ENCODE measurements at regions of chr6 and their contacts with region 1.

Region 1: GRCh38 chr6:137866914-137867684 is at the start of gene TNFAIP3:
- DNase-seq: peak; percentile 95
- H3K4me3 ChIP-seq: peak within 1 kb of the TSS; percentile 75 to 94 (median 94)
- H3K27ac ChIP-seq: peak within 1 kb of the TSS; percentile 95
- H3K4me1 ChIP-seq: peaks cover 44% of the 10 kb centered on the region
- H3K27me3 ChIP-seq: no peaks in the 10 kb centered on the region
- CTCF ChIP-seq: peak; percentile 55 to 66
- total RNA-seq, gene TNFAIP3: 5.2 to 117 TPM

Region 2: DNA sequence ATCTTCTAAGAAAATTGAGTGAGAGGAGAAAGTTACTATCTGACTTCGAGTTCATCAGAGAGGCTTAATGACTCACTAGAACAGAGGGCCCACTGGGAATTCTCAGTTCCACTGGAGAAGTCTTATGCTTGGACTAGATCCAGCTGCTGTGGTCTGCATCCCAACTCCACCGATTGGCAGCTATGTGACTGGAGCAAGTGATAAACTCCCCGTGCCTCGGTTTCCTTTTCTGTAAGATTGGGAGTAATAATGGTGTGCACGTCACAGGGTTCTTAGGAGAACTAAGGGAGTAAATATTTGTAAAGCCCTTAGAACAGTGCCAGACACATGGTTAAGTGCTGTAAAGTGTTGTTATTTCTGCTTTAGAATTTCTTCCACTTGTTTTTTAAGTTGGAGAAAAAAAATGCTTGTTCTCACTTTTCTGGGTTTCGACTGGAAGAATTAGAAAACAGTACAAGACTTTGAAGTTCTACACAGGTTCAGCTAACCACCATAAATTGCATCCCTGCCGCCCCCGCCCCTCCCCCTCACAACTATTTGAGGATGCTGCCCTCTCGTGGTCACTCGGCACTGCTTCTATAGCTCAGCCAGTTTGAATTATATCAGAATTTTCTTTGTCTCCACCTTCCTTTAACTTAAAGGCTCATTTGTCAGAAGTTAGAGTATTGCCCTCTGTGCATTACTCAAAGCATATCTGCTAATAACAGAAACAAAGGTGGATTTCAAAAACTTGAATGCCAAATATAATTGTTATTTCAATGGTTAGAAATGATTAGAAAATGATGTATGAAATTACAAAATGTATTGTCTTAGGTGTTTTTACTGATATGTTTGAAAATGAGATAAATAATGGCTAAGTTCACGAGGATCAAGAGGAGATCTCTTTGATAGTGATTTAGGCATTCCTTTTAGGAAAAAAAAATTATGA is 552.9 kb before region 1 on chr6:
- CTCF ChIA-PET with region 1: no interaction called
- dilution Hi-C with region 1: no loop called
- in situ Hi-C with region 1: no loop called
- intact Hi-C with region 1: no loop called
- DNase-seq: peak; percentile 30
- H3K4me3 ChIP-seq: no peak overlapping the region
- H3K27ac ChIP-seq: no peak overlapping the region
- H3K4me1 ChIP-seq: peaks cover 5% of the 10 kb centered on the region
- H3K27me3 ChIP-seq: no peaks in the 10 kb centered on the region
- CTCF ChIP-seq: peak; percentile 83

Region 3: DNA sequence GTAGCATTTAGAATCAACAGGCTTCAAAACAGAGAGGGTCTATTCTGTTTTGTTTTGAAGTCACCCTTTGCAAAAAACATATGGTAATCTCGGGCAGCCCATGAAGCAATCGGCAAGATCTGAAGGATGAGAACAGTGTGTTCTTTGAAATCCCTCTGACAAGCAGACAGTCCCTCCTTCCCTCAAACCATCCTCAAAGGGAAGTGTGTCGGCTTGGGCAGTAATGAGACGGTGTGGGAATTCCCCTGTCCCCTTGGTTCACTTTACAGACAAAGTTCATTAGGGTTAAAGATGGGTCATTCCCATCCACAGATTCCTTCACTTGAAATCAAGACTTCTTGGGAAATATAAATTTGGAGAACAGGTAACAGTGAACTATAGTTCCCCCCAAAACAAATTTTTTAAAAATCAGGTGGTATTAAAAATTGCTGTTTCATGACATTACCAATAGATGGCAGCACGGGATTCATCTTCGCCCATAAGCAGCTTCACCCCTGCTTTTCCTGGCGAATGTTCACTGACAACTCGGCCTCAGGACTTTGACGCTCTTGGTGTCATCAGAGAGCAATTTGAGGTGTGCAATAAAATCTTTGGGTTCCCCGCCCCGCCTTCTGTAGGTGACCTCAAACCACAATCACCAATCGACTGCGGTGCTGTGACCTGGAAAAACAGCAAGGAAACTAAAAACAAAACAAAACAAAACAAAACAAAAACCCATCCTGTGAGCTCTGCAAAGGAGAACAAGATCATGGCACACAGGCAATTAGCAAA is 159.3 kb before region 1 on chr6:
- CTCF ChIA-PET with region 1: interaction called, 9 read pairs
- dilution Hi-C with region 1: no loop called
- in situ Hi-C with region 1: loop called (anchors 5 kb)
- intact Hi-C with region 1: loop called (anchors 1 kb)
- DNase-seq: peak; percentile 92
- H3K4me3 ChIP-seq: no peak overlapping the region
- H3K27ac ChIP-seq: peak overlapping the region; percentile 64
- H3K4me1 ChIP-seq: peaks cover 7% of the 10 kb centered on the region
- H3K27me3 ChIP-seq: no peaks in the 10 kb centered on the region
- CTCF ChIP-seq: peak; percentile 65 to 75

Region 4: DNA sequence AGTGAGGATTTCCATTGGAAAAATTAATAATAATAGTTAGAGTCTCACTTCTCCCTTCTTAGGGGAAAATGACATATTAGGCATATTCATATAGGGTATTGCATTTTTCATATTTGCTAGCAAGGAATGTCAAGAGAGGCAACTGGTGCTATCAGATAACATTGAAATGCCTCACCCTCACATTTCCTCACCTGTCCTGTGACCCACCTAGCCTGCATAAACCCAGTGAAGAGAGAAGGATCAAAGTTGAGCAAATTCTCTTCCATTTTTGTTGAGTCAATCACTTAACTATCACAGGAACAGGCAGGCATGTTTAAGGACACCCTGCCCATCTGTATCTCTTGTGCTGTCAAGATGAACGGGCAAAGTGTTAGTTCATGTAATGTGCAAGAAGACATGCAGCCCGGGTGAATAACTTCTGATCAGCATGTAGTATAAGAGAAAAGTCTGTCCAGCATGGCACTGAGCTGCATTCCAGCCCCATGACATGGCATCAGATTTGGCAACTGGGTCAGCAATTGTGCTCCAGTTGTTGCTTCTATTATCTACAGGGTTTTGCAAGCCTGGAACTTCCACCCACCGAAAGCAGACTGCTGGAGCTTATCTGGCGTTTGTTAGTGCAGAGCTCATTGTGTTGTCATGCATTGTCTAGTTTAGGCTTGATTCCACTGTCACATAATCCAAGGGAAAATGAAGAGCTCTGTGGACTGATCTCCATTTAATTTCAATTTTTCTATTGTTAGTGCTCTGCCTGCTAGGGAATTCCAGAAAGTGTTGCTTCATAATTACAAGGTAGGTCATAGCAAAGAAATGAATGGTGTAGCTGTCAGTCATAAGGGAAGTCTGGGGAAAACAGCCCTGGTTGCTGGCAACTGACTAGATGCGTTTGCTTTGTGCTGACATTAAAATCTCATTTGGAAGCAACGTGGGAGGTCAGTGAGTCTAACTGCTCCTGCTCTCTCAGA is 138.4 kb before region 1 on chr6:
- CTCF ChIA-PET with region 1: interaction called, 6 read pairs
- dilution Hi-C with region 1: no loop called
- in situ Hi-C with region 1: no loop called
- intact Hi-C with region 1: loop called (anchors 1 kb)
- DNase-seq: peak; percentile 99
- H3K4me3 ChIP-seq: no peak overlapping the region
- H3K27ac ChIP-seq: peak overlapping the region; percentile 91
- H3K4me1 ChIP-seq: peaks cover 51% of the 10 kb centered on the region
- H3K27me3 ChIP-seq: no peaks in the 10 kb centered on the region
- CTCF ChIP-seq: no peak

Region 5: GRCh38 chr6:137799950-137800568 is 67.0 kb before region 1 on chr6:
- CTCF ChIA-PET with region 1: interaction called, 8 read pairs
- dilution Hi-C with region 1: no loop called
- in situ Hi-C with region 1: loop called in 1 of 2 experiments (anchors 5 kb)
- intact Hi-C with region 1: loop called (anchors 1 kb)
- DNase-seq: peak; percentile 72
- H3K4me3 ChIP-seq: no peak overlapping the region
- H3K27ac ChIP-seq: no peak overlapping the region
- H3K4me1 ChIP-seq: no peaks in the 10 kb centered on the region
- H3K27me3 ChIP-seq: no peaks in the 10 kb centered on the region
- CTCF ChIP-seq: peak; percentile 71 to 73

Region 6: DNA sequence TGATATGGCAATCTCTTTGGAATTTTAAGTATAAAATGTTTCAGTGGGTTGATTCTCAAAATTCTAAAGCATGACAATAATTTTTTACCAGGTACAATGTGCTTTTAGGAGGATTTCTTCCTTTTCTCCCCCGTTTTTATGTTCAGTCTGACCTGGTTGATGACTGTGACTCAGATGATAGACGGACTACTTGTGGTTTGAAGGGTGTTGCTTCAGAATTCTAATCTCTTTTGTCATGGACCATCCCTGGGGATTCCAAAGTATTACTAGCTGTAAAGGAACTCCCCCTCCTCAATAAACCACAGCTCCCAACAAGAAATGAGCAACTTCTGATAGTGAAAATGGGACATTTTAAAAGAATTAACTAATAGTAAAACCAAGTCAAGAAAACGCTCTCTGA is 35.0 kb before region 1 on chr6:
- CTCF ChIA-PET with region 1: interaction called, 3 read pairs
- dilution Hi-C with region 1: no loop called
- in situ Hi-C with region 1: no loop called
- intact Hi-C with region 1: loop called (anchors 1 kb)
- DNase-seq: peak; percentile 93
- H3K4me3 ChIP-seq: no peak overlapping the region
- H3K27ac ChIP-seq: peak overlapping the region; percentile 84
- H3K4me1 ChIP-seq: peaks cover 61% of the 10 kb centered on the region
- H3K27me3 ChIP-seq: no peaks in the 10 kb centered on the region
- CTCF ChIP-seq: no peak

Region 7: GRCh38 chr6:137921823-137922222 is 54.7 kb after region 1 on chr6:
- CTCF ChIA-PET with region 1: no interaction called
- dilution Hi-C with region 1: no loop called
- in situ Hi-C with region 1: no loop called
- intact Hi-C with region 1: no loop called
- DNase-seq: no peak
- H3K4me3 ChIP-seq: no peak overlapping the region
- H3K27ac ChIP-seq: no peak overlapping the region
- H3K4me1 ChIP-seq: peaks cover 12% of the 10 kb centered on the region
- H3K27me3 ChIP-seq: no peaks in the 10 kb centered on the region
- CTCF ChIP-seq: peak in 1 of 2 donors; percentile 22

Region 8: GRCh38 chr6:137944793-137945498 is 77.8 kb after region 1 on chr6:
- CTCF ChIA-PET with region 1: interaction called, 6 read pairs
- dilution Hi-C with region 1: no loop called
- in situ Hi-C with region 1: loop called in 1 of 2 experiments (anchors 5 kb)
- intact Hi-C with region 1: loop called (anchors 1 kb)
- DNase-seq: peak; percentile 34
- H3K4me3 ChIP-seq: no peak overlapping the region
- H3K27ac ChIP-seq: no peak overlapping the region
- H3K4me1 ChIP-seq: peaks cover 12% of the 10 kb centered on the region
- H3K27me3 ChIP-seq: no peaks in the 10 kb centered on the region
- CTCF ChIP-seq: peak; percentile 68 to 81

Region 9: GRCh38 chr6:138891255-138891986 is 1024.3 kb after region 1 on chr6:
- CTCF ChIA-PET with region 1: no interaction called
- dilution Hi-C with region 1: no loop called
- in situ Hi-C with region 1: no loop called
- intact Hi-C with region 1: no loop called
- DNase-seq: peak; percentile 11
- H3K4me3 ChIP-seq: no peak overlapping the region
- H3K27ac ChIP-seq: no peak overlapping the region
- H3K4me1 ChIP-seq: peaks cover 7% of the 10 kb centered on the region
- H3K27me3 ChIP-seq: no peaks in the 10 kb centered on the region
- CTCF ChIP-seq: no peak